ENCODE measurements at regions of chr19 and their contacts with region 1.

Region 1: GRCh38 chr19:7943444-7944176 is at the start of gene TIMM44:
- H3K4me3 Mint-ChIP-seq: peak within 1 kb of the TSS; percentile 94
- H3K27ac Mint-ChIP-seq: peak within 1 kb of the TSS; percentile 95
- H3K4me1 Mint-ChIP-seq: peaks cover 38% of the 10 kb centered on the region
- H3K27me3 Mint-ChIP-seq: no peaks in the 10 kb centered on the region

Region 2: DNA sequence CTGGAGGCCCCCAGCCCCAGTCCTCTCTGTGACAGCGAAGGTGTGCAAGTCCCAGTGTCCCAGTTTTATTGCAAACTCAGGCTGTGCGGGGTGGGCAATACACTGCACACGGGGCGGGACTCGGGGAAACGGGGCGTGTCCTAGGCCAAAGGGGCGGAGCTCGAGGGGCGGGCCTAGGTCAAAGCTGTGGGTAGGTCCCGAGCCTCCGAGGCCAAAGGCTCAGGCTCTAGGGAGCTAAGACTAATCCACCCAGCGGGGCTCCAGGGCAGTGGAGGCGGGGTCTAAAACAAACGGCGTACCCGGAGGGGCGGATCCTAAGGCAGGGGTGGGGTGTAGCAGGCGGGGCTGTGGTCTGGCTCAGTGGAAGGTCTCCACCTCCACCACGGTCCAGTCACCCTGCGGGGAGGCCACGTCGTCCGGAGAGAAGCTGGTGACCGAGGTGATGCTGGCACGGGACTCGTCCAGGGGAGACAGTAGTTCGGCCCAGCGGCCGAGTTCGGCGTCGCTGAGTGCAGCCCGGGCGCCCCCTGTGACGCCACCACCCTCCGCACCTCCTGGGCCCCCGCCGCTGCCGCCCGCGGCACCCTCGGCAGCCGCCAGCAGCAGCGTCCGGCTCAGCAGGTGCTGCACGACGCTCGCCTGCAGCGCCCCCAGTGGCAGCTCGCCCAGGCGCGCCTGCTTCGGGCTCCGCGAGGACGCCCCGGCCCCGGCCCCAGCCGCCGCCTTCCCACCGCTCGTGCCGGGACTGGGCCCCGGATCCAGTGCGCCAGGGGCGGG is 74.7 kb before region 1 on chr19:
- intact Hi-C with region 1: no loop called
- H3K4me3 Mint-ChIP-seq: peak overlapping the region; percentile 62
- H3K27ac Mint-ChIP-seq: peak overlapping the region; percentile 27
- H3K4me1 Mint-ChIP-seq: peaks cover 56% of the 10 kb centered on the region
- H3K27me3 Mint-ChIP-seq: peaks cover 79% of the 10 kb centered on the region

Region 3: DNA sequence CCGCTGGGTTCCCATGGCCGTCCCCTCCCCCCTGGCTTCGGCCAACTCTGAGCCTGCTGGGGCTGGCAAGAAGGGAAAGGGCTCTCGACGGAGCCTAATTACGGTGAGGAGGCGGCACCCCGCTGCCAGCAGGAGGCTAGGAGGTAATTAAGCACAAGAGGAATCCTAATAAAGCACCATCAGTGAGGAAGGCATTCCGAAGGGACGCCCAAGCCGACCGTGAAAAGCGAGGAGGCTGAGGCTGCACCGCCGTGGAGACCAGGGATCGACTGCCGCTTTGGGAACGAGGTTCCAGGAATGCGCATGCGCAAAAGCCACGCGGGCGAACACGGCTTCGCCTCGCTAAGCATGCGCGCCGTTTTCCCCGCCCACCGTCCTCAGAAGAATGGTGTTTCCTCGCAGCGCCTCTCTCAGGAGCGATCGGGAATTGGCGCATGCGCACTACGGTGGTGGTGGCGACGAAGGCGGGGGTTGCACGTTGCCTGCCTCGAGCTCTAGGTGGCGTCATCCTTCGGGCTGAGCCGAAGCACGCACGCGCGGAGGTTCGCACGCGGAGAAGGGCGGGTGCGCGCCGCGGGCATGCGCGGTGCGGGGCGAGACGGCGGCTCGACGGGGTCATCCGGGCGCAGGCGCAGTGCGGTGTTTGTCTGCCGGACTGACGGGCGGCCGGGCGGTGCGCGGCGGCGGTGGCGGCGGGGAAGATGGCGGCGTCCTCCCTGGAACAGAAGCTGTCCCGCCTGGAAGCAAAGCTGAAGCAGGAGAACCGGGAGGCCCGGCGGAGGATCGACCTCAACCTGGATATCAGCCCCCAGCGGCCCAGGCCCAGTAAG is 40.2 kb before region 1 on chr19 and contains the start of gene MAP2K7:
- intact Hi-C with region 1: loop called (anchors 1 kb)
- H3K4me3 Mint-ChIP-seq: peak within 1 kb of the TSS; percentile 90
- H3K27ac Mint-ChIP-seq: peak within 1 kb of the TSS; percentile 86
- H3K4me1 Mint-ChIP-seq: peaks cover 45% of the 10 kb centered on the region
- H3K27me3 Mint-ChIP-seq: peaks cover 15% of the 10 kb centered on the region

Region 4: DNA sequence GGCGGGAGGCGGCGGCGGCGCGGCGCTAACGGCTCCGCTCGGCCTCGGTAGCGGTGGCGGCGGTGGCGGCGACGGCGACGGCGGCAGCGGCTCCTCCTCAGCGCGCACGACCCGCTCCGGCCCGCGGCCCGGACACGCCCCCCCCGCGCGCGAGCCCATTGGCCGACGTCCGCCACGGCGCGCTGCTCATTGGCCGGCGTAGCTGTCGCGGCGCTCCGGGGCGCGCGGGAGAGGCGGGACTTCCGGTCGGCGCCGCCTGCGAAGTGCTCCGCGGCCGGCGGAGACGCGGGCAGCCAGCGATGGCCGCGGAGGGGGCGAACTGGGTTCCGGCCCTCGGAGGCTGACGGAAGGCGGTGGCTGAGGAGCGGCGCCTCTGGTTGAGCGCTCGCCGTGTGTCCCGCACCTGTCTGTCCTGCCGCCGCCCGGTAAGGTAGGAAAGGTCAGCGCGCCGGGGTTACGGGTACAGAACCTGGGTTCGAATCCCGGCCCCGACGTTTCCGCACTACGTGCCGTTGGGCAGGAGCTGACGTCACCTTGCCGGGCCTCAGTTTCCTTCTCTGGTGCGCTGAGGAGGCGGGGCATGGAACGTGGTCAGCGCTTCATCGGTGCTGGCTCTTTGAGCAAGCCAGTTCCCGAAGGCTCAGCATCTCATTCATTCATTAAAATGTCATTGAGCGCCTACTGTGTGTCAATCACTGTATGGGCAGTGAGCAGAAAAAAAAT is 62.1 kb after region 1 on chr19 and contains the start of gene ELAVL1:
- intact Hi-C with region 1: loop called (anchors 2 kb)
- H3K4me3 Mint-ChIP-seq: peak within 1 kb of the TSS; percentile 79
- H3K27ac Mint-ChIP-seq: peak within 1 kb of the TSS; percentile 85
- H3K4me1 Mint-ChIP-seq: peaks cover 31% of the 10 kb centered on the region
- H3K27me3 Mint-ChIP-seq: no peaks in the 10 kb centered on the region

Region 5: DNA sequence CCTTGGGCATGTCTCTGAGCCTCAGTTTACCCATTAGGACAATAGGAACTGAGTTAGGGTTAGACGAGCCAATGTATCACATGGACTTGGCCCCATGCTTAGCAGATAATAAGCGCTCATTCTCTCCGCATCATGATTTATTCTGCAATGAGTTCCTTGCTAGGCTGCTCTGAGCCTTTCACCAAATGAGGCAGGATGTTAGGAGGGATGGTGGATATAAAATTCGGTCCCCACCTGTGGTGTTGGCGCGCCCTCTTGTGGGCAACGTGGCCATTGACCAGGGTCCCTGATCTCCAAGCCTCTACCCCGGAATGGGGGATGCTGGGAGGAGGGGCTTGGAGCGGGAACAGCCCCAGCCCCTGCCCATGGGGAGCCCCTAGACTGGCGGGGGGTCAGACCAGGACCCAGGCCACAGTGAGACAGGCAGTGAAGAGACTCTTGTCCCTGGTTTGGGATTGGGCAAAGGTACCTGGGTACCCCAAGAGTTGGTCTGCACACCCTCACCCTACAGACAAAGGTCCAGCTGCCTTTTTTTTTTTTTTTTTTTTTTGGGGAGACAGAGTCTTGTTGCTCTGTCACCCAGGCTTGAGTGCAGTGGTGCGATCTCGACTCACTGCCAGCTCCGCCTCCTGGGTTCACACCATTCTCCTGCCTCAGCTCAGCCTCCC is 309.4 kb after region 1 on chr19:
- intact Hi-C with region 1: loop called (anchors 1 kb)
- H3K4me3 Mint-ChIP-seq: no peak overlapping the region
- H3K27ac Mint-ChIP-seq: no peak overlapping the region
- H3K4me1 Mint-ChIP-seq: no peaks in the 10 kb centered on the region
- H3K27me3 Mint-ChIP-seq: peaks cover 26% of the 10 kb centered on the region

Measured in dendritic cell treated with granulocyte-macrophage colony-stimulating factor and Interleukin-4, amounts not matched to agents 40 ng/mL and 50 ng/mL, for 4 days (primary cell).